WTC11 (cell line): ENCODE measurements at regions of chr16 and their contacts with region 1.

Region 1: DNA sequence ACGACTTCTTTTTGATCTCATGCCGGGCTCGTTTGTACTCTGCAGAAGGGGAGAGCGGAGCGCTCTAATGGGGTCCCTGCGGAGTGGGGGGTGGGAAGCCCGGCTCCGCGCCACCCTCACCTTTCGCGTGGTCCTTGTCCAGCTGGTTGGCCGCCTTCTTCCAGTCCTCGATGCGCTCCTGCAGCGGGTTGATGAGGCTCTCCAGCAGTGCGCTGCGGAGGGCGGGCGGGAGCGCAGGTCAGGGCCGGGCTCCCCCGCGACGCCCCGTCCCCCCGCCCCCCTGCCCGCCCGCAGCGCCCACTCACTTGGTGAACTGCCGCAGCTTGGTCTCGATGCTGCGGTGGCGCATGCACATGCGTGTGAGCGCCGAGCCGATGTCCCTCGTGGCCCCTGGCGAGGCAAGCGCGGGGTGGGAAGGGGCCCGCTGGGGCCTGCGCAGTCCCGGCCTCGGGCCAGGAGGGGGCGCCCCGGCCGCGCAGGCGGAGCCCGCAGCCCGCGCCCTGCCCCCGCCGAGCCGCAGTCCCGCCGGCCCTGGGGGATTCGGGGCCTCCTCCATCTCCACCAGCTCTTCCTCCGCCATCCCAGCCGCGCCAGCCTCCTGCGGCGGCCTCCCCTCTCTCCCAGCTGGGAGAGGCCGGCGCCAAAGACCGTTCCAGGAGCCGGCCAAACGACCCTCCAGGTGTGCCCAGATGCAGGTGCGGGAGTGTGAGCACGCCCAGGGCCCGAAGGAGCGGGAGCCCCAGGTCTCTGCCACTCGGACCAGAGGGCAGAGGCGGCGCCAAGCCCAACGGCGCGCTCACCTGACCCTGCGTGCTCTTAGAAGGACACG is 6.0 kb downstream of the MTSS2 start:
- DNase-seq: peak; percentile 72
- ATAC-seq: peak; percentile 79
- H3K4me3 Mint-ChIP-seq: no peak overlapping the region
- H3K27ac Mint-ChIP-seq: no peak overlapping the region
- H3K4me1 Mint-ChIP-seq: peaks cover 3% of the 10 kb centered on the region; the same call in 1 of the 2 replicates
- H3K27me3 Mint-ChIP-seq: no peaks in the 10 kb centered on the region
- CTCF ChIP-seq: peak; percentile 53; the same call in 1 of the 2 replicates

Region 2: GRCh38 chr16:70627696-70628095 is 52.2 kb before region 1 on chr16:
- CTCF ChIA-PET with region 1: no interaction called
- POLR2A ChIA-PET with region 1: no interaction called
- DNase-seq: no peak
- ATAC-seq: no peak
- H3K4me3 Mint-ChIP-seq: no peak overlapping the region
- H3K27ac Mint-ChIP-seq: no peak overlapping the region
- H3K4me1 Mint-ChIP-seq: peaks cover 38% of the 10 kb centered on the region
- H3K27me3 Mint-ChIP-seq: peaks cover 13% of the 10 kb centered on the region
- CTCF ChIP-seq: no peak

Region 3: GRCh38 chr16:70638814-70639792 is 40.8 kb before region 1 on chr16:
- CTCF ChIA-PET with region 1: no interaction called
- POLR2A ChIA-PET with region 1: no interaction called
- DNase-seq: no peak
- ATAC-seq: peak; percentile 33; the same call in 1 of the 2 replicates
- H3K4me3 Mint-ChIP-seq: no peak overlapping the region
- H3K27ac Mint-ChIP-seq: peak overlapping the region; percentile 65
- H3K4me1 Mint-ChIP-seq: peaks cover 23% of the 10 kb centered on the region
- H3K27me3 Mint-ChIP-seq: no peaks in the 10 kb centered on the region
- CTCF ChIP-seq: no peak

Region 4: GRCh38 chr16:70660672-70661350 is 19.1 kb before region 1 on chr16:
- CTCF ChIA-PET with region 1: interaction called, 12 read pairs
- POLR2A ChIA-PET with region 1: no interaction called
- DNase-seq: no peak
- ATAC-seq: peak; percentile 78
- H3K4me3 Mint-ChIP-seq: no peak overlapping the region
- H3K27ac Mint-ChIP-seq: no peak overlapping the region
- H3K4me1 Mint-ChIP-seq: peaks cover 13% of the 10 kb centered on the region
- H3K27me3 Mint-ChIP-seq: no peaks in the 10 kb centered on the region
- CTCF ChIP-seq: no peak

Region 5: GRCh38 chr16:70715055-70715858 is 35.4 kb after region 1 on chr16:
- CTCF ChIA-PET with region 1: interaction called, 14 read pairs
- POLR2A ChIA-PET with region 1: no interaction called
- DNase-seq: no peak
- ATAC-seq: peak; percentile 46
- H3K4me3 Mint-ChIP-seq: no peak overlapping the region
- H3K27ac Mint-ChIP-seq: no peak overlapping the region; the same call in 1 of the 2 replicates
- H3K4me1 Mint-ChIP-seq: peaks cover 48% of the 10 kb centered on the region
- H3K27me3 Mint-ChIP-seq: no peaks in the 10 kb centered on the region
- CTCF ChIP-seq: no peak

Region 6: GRCh38 chr16:70737377-70738082 is 57.6 kb after region 1 on chr16:
- CTCF ChIA-PET with region 1: interaction called, 91 read pairs
- POLR2A ChIA-PET with region 1: no interaction called
- DNase-seq: no peak
- ATAC-seq: no peak
- H3K4me3 Mint-ChIP-seq: no peak overlapping the region
- H3K27ac Mint-ChIP-seq: no peak overlapping the region; the same call in 1 of the 2 replicates
- H3K4me1 Mint-ChIP-seq: peaks cover 21% of the 10 kb centered on the region
- H3K27me3 Mint-ChIP-seq: no peaks in the 10 kb centered on the region
- CTCF ChIP-seq: no peak

Region 7: DNA sequence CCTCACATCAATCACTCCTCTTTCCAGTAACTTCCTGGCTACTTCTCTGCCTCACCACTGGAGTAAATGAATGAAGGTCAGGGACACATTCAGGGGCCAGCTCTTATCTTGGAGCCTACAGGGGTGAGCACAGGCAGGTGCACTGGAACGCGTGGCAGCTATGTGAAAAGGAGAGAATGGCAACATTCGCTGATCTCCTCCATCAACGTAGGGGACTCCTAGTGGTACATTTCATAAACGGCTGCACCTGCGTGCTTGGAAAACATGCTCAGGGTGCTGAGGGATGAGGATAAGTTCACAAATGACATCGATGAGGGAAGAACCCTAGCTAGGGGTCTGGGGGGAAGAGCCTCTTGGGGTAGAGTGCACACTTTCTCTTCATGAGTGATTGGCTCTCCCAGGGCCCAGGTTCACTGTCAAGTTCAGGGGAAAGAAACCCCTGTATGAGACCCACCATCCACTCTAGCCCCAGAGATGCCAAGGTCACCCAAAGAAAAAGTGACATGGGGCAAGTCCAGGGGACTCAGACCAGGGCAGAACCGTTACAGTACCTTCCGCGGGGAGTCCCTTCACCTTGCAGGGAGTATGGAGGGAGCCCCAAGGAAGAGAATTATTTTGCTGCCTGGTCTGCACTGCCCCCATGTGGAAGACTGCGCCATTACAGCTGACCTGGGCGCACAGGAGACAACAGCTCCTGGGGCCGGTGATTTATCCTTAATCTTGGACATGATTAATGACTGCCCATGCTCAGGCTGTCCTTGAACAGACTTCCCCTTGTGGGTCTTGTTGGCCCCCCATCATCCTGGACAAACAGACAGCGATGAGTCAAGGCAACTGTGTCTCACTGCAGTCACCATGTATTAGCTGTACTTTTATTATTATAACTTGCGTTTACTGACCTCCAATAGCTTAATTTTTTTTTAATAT is 91.0 kb after region 1 on chr16:
- CTCF ChIA-PET with region 1: interaction called, 142 read pairs
- POLR2A ChIA-PET with region 1: no interaction called
- DNase-seq: peak; percentile 86
- ATAC-seq: peak; percentile 92
- H3K4me3 Mint-ChIP-seq: no peak overlapping the region
- H3K27ac Mint-ChIP-seq: no peak overlapping the region
- H3K4me1 Mint-ChIP-seq: no peaks in the 10 kb centered on the region
- H3K27me3 Mint-ChIP-seq: no peaks in the 10 kb centered on the region
- CTCF ChIP-seq: peak; percentile 99